ENCODE measurements at regions of chr6 and their contacts with region 1.

Region 1: DNA sequence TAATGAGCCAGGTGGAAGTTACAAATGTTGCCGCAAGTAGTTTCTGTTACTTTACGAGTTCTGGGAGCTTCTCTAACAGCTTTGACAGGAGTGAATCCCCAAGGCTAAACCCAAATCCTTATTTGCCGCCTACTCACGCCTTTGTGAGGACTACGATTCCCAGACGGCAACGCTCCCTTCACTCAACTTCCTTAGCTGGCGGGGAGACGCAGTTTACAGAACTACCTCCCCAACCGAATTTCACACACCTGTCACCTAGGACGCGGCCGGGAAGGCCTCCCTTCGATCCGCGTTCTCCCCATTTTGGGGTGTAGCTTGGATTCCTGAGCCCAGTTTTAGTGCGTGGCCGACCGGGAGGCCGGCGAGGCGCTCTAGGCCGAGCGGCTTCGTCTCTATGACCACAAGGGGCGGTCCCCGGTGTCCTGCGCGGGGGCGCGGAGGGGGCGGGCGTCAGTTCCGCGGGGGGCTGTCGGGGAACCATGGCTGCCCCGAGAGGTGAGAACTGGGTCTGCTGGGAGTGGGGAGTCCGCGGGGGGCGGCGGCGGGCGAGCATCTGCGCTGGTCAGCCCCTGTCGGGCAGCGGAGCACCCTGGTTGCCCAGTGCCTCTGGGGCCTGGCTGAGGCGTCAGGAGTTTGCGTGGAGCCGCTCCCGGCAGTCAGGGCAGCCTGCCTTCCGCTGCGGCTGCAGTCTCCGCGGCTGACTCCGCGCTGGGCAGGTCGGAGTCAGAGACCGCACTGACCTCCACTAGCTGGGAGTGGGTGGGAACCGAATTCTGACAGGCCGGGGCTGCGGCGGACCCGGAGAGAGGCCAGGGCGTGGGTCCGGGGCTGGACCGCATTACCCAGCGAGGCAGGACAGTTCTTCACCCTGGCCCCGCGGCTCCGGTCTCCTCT is at the start of gene SLC35A1:
- DNase-seq: peak; percentile 80
- H3K4me3 Mint-ChIP-seq: peak within 1 kb of the TSS; percentile 95
- H3K27ac Mint-ChIP-seq: peak within 1 kb of the TSS; percentile 92
- H3K4me1 Mint-ChIP-seq: peaks cover 15% of the 10 kb centered on the region
- H3K27me3 Mint-ChIP-seq: peaks cover 4% of the 10 kb centered on the region
- total RNA-seq, gene SLC35A1: 6.7 to 6.8 TPM

Region 2: DNA sequence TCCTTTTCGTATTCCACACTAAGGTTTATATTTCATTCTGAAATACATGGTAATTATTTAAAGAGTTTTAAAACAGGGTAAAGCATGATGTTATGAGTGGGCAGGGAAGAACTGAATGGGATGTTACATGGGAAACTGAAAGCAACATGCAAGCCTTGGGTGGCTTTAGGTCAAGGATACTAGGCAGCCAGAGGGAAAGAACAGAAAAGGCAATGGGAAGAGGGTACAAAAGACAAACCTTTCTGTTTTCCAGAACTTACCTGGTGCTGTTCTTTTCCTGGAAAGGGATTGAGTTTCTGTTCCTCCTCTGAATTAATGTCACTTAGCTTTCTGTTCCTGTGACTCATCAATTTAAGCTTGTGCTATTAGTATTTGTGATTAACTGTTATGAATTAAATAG is 221.5 kb before region 1 on chr6:
- CTCF ChIA-PET with region 1: no interaction called
- intact Hi-C with region 1: loop called (anchors 5 kb)
- DNase-seq: no peak
- H3K4me3 Mint-ChIP-seq: peak overlapping the region; percentile 9
- H3K27ac Mint-ChIP-seq: peak overlapping the region; percentile 76
- H3K4me1 Mint-ChIP-seq: peaks cover 24% of the 10 kb centered on the region
- H3K27me3 Mint-ChIP-seq: no peaks in the 10 kb centered on the region

Region 3: GRCh38 chr6:87407901-87408720 is 64.7 kb before region 1 on chr6 and contains the start of gene CFAP206:
- CTCF ChIA-PET with region 1: no interaction called
- intact Hi-C with region 1: loop called (anchors 1 kb)
- DNase-seq: peak; percentile 81
- H3K4me3 Mint-ChIP-seq: peak within 1 kb of the TSS; percentile 84
- H3K27ac Mint-ChIP-seq: no peak within 1 kb of the TSS
- H3K4me1 Mint-ChIP-seq: no peaks in the 10 kb centered on the region
- H3K27me3 Mint-ChIP-seq: peaks cover 11% of the 10 kb centered on the region
- total RNA-seq, gene CFAP206: not detected

Region 4: GRCh38 chr6:88641178-88641903 is 1168.6 kb after region 1 on chr6:
- CTCF ChIA-PET with region 1: no interaction called
- intact Hi-C with region 1: no loop called
- DNase-seq: peak; percentile 19
- H3K4me3 Mint-ChIP-seq: no peak overlapping the region
- H3K27ac Mint-ChIP-seq: peak overlapping the region; percentile 54
- H3K4me1 Mint-ChIP-seq: peaks cover 14% of the 10 kb centered on the region
- H3K27me3 Mint-ChIP-seq: no peaks in the 10 kb centered on the region